GM12878 (cell line): ENCODE measurements at regions of chr18 and their contacts with region 1.

Region 1: DNA sequence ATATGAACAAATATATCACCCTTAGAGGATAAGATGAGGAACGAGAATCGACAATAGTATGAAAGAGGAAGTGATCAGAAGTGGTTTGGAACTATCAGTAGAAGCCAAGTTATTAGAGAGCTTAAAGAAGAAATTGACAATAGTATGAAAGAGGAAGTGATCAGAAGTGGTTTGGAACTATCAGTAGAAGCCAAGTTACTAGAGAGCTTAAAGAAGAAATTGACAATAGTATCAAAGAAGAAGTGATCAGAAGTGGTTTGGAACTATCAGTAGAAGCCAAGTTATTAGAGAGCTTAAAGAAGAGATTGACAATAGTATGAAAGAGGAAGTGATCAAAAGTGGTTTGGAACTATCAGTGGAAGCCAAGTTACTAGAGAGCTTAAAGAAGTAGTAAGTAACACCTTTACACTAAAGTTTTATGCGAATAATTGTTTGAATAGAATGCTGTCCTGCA is 175.5 kb downstream of the ZNF407 start:
- DNase-seq: peak; percentile 53
- ATAC-seq: peak; percentile 90
- H3K4me3 ChIP-seq: no peak overlapping the region
- H3K27ac ChIP-seq: no peak overlapping the region
- H3K4me1 ChIP-seq: peaks cover 12% of the 10 kb centered on the region
- H3K27me3 ChIP-seq: no peaks in the 10 kb centered on the region
- CTCF ChIP-seq: no peak
- EP300 ChIP-seq: peak in 1 of 2 experiments; percentile 75; a peak in 2 of 4 replicates
- POLR2A ChIP-seq: no peak
- RAD21 ChIP-seq: no peak

Region 2: GRCh38 chr18:74796841-74797576 is 23.8 kb after region 1 on chr18:
- CTCF ChIA-PET with region 1: interaction called, 4 read pairs
- POLR2A ChIA-PET with region 1: no interaction called
- RAD21 ChIA-PET with region 1: interaction called, 3 read pairs
- SMC1A ChIA-PET with region 1: interaction called, 19 read pairs
- in situ Hi-C with region 1: no loop called
- intact Hi-C with region 1: no loop called
- DNase-seq: peak; percentile 40
- ATAC-seq: peak; percentile 99
- H3K4me3 ChIP-seq: peak overlapping the region; percentile 51
- H3K27ac ChIP-seq: 0 out of 2 replicates have a peak overlapping the region, but pooled peaks have one; percentile 17
- H3K4me1 ChIP-seq: peaks cover 16% of the 10 kb centered on the region; the same call in 1 of the 2 replicates
- H3K27me3 ChIP-seq: no peaks in the 10 kb centered on the region
- CTCF ChIP-seq: no peak
- EP300 ChIP-seq: no peak; a peak in 1 of 4 replicates
- POLR2A ChIP-seq: no peak
- RAD21 ChIP-seq: no peak